Panc1 (cell line): ENCODE measurements at regions of chr14 and their contacts with region 1.

Region 1: DNA sequence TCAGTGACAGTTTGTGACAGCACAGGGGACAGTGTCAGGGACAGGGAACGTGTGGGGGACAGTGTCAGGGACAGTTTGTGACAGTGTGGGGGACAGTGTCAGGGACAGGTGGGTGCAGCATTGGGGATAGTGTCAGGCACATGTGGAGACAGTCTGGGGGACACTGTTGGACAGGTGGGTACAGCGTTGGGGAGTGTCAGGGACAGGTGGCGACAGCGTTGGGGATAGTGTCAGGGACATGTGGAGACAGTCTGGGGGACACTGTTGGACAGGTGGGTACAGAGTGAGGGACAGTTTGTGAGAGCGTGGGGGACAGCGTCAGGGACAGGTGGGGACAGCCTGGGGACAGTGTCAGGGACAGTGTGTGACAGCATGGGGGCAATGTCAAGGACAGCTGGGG is 140.0 kb downstream of the TMEM121 start:
- DNase-seq: no peak
- ATAC-seq: no peak
- H3K4me3 ChIP-seq: no peak overlapping the region
- H3K27ac ChIP-seq: no peak overlapping the region
- H3K4me1 ChIP-seq: no peaks in the 10 kb centered on the region
- H3K27me3 ChIP-seq: no peaks in the 10 kb centered on the region
- CTCF ChIP-seq: no peak

Region 2: GRCh38 chr14:105931808-105932483 is 265.5 kb after region 1 on chr14:
- CTCF ChIA-PET with region 1: no interaction called
- POLR2A ChIA-PET with region 1: no interaction called
- in situ Hi-C with region 1: no loop called
- intact Hi-C with region 1: loop called (anchors 10 kb)
- DNase-seq: no peak
- ATAC-seq: peak; percentile 66; the same call in 1 of the 2 replicates
- H3K4me3 ChIP-seq: no peak overlapping the region
- H3K27ac ChIP-seq: no peak overlapping the region
- H3K4me1 ChIP-seq: no peaks in the 10 kb centered on the region
- H3K27me3 ChIP-seq: peaks cover 3% of the 10 kb centered on the region
- CTCF ChIP-seq: peak; percentile 48